ENCODE measurements at regions of chr22 and their contacts with region 1.

Region 1: DNA sequence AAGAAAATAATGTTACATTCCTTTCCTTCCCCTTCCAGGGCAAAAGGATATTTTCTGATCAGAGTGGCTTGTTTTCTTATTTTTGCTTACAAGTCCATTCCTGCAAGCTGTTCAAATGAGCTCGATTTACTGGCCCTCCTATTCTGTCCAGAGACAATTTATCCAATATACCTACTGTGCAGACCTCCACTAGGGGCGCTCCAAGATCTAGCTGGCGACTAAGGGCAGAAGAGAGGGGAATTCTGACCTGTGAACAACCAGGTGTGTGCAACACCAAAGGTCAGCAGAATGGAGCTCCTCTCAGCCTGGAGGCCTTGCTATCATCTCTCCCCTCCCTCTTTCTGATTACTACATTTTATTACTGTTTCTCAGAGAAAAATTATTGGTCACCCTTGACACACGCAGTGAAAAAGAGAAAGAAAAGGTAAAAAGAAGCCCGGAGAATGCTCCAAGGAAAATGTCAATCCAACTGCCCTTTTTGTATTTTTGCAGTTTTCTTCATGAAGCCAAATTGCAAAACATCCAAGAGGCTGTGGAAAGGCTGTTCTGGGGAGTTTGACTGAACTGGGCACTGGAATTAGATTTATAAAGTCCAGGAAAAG is 3.2 kb downstream of the SEZ6L start:
- DNase-seq: peak; percentile 40
- H3K4me3 ChIP-seq: no peak overlapping the region
- H3K27ac ChIP-seq: no peak overlapping the region
- H3K4me1 ChIP-seq: no peaks in the 10 kb centered on the region
- H3K27me3 ChIP-seq: peaks cover 54% of the 10 kb centered on the region
- CTCF ChIP-seq: peak; percentile 74

Region 2: GRCh38 chr22:25853501-25854284 is 318.8 kb before region 1 on chr22:
- CTCF ChIA-PET with region 1: interaction called, 6 read pairs
- POLR2A ChIA-PET with region 1: no interaction called
- intact Hi-C with region 1: loop called (anchors 10 kb)
- DNase-seq: peak; percentile 60
- H3K4me3 ChIP-seq: no peak overlapping the region
- H3K27ac ChIP-seq: no peak overlapping the region
- H3K4me1 ChIP-seq: no peaks in the 10 kb centered on the region
- H3K27me3 ChIP-seq: peaks cover 4% of the 10 kb centered on the region
- CTCF ChIP-seq: peak; percentile 54

Region 3: GRCh38 chr22:26066534-26066933 is 106.0 kb before region 1 on chr22:
- CTCF ChIA-PET with region 1: interaction called, 12 read pairs
- POLR2A ChIA-PET with region 1: no interaction called
- intact Hi-C with region 1: no loop called
- DNase-seq: peak; percentile 59
- H3K4me3 ChIP-seq: no peak overlapping the region
- H3K27ac ChIP-seq: no peak overlapping the region
- H3K4me1 ChIP-seq: peaks cover 4% of the 10 kb centered on the region
- H3K27me3 ChIP-seq: no peaks in the 10 kb centered on the region
- CTCF ChIP-seq: 0 out of 2 replicates have a peak, but pooled peaks have one; percentile 11